HAP-1 (cell line): ENCODE measurements at regions of chr11 and their contacts with region 1.

Region 1: GRCh38 chr11:96389720-96390487 is at the starts of genes CCDC82 and JRKL:
- DNase-seq: peak; percentile 93 to 99
- H3K4me3 ChIP-seq: peak within 1 kb of the TSS; percentile 72
- H3K4me1 ChIP-seq: peaks cover 46% of the 10 kb centered on the region
- H3K27me3 ChIP-seq: no peaks in the 10 kb centered on the region

Region 2: DNA sequence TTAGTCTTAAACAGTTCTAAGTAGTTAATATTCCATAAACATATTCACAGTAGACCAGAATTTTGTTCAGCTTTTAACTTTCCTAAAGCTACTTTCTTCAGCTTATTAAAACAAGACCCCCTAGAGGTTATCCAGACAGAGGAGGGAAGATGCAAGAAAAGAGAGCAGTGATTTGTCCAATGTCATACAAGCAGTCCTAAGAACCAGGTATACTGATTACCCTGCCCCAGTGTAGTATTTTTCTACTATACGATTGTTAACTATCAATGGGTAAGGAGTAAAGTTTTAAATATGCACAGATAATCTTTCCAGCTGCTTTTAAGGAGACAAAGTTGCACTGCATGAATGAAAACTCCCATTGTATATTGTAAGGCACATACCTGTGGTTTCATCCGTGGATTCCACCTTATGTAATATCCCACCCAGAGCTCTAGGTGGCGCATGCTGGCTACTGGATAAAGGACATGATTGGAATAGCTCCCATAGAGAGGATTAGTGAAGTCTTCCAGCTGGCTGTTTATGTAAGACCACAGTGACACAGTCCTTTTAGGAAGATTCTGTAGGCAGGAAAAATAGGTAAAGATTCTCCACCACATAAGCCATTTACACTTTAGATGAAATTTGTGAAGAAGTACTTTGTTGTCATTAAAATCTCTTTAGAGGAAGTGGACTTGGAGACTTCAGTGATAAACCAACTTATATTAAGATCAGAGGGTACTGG is 554.0 kb before region 1 on chr11:
- in situ Hi-C with region 1: loop called (anchors 25 kb)
- DNase-seq: peak; percentile 80 to 89
- H3K4me3 ChIP-seq: no peak overlapping the region
- H3K4me1 ChIP-seq: no peaks in the 10 kb centered on the region
- H3K27me3 ChIP-seq: no peaks in the 10 kb centered on the region

Region 3: GRCh38 chr11:96279018-96279895 is 110.6 kb before region 1 on chr11:
- in situ Hi-C with region 1: no loop called
- DNase-seq: peak in 1 of 2 experiments; percentile 75
- H3K4me3 ChIP-seq: no peak overlapping the region
- H3K4me1 ChIP-seq: peaks cover 34% of the 10 kb centered on the region
- H3K27me3 ChIP-seq: no peaks in the 10 kb centered on the region